ENCODE measurements at regions of chr3 and their contacts with region 1.

Region 1: DNA sequence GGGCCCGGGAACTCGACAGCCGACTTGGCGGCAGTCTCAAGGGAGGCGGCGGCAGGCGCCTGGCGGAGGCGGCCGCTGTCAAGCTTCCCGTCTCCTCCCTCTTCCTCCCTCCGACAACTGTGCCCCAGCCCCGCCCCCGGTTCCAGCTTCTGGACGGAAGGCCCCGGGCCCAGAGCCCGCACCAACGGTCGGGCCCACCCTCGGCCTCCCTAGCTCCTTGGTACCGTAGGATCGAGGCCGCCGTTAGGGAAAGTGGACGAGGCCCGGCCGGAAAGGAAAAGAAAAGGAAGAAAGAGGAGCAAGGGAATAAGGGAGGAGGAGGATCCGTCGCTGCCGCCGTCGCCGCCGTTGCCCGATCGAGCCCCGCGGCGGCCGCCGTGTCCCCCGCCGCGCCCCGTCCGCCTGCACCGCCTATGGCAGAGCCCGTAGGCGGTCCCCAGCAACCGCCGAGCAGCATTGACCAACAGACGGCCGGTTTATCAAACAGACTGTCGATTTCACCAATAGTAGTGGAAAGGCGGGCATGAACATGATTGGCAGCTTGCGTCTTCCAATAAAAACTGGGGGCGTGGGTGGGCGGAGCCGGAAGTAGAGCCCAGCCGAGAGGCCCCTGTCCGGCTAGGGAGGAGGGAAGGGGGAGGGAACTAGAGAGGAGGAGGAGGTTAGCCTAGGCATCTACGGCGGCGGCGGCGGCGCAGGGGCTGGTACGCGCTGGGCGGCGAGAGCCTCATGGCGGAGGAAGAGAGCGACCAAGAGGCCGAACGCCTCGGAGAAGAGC is at the starts of genes CGGBP1 and ZNF654:
- DNase-seq: peak; percentile 98 to 99
- ATAC-seq: peak; percentile 87 to 96 (median 89)
- H3K4me3 ChIP-seq: peak within 1 kb of the TSS; percentile 98
- H3K4me3 Mint-ChIP-seq: peak within 1 kb of the TSS; percentile 99
- H3K27ac ChIP-seq: peak within 1 kb of the TSS; percentile 98
- H3K27ac Mint-ChIP-seq: peak within 1 kb of the TSS; percentile 90 to 97
- H3K4me1 ChIP-seq: peaks cover 8% of the 10 kb centered on the region
- H3K4me1 Mint-ChIP-seq: peaks cover 54 to 57% of the 10 kb centered on the region in 2 donors
- H3K27me3 ChIP-seq: no peaks in the 10 kb centered on the region
- H3K27me3 Mint-ChIP-seq: no peaks in the 10 kb centered on the region
- CTCF ChIP-seq: no peak
- total RNA-seq, gene CGGBP1: 99.8 to 103 (median 101) TPM
- total RNA-seq, gene ZNF654: 11.9 to 16.7 (median 12.2) TPM

Region 2: DNA sequence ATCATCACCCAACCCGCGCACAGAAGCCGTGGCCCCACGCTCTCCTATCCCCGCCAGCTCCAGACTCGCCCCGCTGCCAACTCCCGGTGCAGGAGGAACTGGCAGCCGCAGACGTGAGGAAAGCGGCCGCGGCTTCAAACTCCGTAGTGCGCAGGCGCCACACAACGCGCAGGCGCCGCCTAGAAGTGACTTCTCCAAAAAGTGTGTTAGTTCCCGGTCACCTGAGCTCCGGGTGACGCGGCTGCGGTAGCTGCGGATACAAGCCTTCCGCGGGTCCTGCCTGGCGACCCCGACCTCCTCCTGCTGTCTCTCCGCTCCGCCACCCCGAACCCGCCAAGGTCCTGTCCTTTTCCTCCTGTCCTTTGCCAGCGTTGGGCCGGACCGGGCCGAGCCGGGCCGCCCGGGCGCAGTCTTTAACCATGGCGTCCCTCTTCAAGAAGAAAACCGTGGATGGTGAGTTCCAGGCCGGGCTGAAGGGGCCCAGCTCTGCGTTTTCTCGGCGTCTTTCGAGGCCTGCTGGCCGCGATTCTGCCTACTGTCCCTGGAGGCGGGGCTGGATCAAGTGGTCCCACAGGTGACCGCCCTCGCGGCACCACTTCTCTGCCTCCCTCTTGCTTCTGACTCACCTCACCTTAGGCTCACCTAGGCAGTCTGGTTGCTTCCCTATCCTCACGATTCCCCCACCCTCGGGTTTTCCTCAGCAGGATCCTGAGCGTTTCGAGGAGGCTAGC is 831.5 kb before region 1 on chr3 and contains the start of gene CHMP2B:
- intact Hi-C with region 1: loop called (anchors 2 kb)
- DNase-seq: peak; percentile 91 to 96
- ATAC-seq: peak; percentile 88 to 93 (median 91)
- H3K4me3 ChIP-seq: peak within 1 kb of the TSS; percentile 94
- H3K4me3 Mint-ChIP-seq: peak within 1 kb of the TSS; percentile 99
- H3K27ac ChIP-seq: peak within 1 kb of the TSS; percentile 87
- H3K27ac Mint-ChIP-seq: peak within 1 kb of the TSS; percentile 94 to 100
- H3K4me1 ChIP-seq: peaks cover 4% of the 10 kb centered on the region
- H3K4me1 Mint-ChIP-seq: peaks cover 33 to 43% of the 10 kb centered on the region in 2 donors
- H3K27me3 ChIP-seq: peaks cover 3% of the 10 kb centered on the region
- H3K27me3 Mint-ChIP-seq: peaks cover 7 to 14% of the 10 kb centered on the region in 2 donors
- CTCF ChIP-seq: no peak
- total RNA-seq, gene CHMP2B: 22.0 to 34.2 (median 29.1) TPM

Region 3: GRCh38 chr3:88019024-88019423 is 39.8 kb before region 1 on chr3:
- intact Hi-C with region 1: loop called (anchors 5 kb)
- DNase-seq: peak in 1 of 2 donors; percentile 63
- ATAC-seq: peak; percentile 89 to 99 (median 89)
- H3K4me3 ChIP-seq: no peak overlapping the region
- H3K4me3 Mint-ChIP-seq: peak overlapping the region; percentile 19
- H3K27ac ChIP-seq: no peak overlapping the region
- H3K27ac Mint-ChIP-seq: no peak overlapping the region
- H3K4me1 ChIP-seq: peaks cover 8% of the 10 kb centered on the region
- H3K4me1 Mint-ChIP-seq: peaks cover 17 to 24% of the 10 kb centered on the region in 2 donors
- H3K27me3 ChIP-seq: no peaks in the 10 kb centered on the region
- H3K27me3 Mint-ChIP-seq: peaks cover 18 to 58% of the 10 kb centered on the region in 2 donors
- CTCF ChIP-seq: no peak

Region 4: DNA sequence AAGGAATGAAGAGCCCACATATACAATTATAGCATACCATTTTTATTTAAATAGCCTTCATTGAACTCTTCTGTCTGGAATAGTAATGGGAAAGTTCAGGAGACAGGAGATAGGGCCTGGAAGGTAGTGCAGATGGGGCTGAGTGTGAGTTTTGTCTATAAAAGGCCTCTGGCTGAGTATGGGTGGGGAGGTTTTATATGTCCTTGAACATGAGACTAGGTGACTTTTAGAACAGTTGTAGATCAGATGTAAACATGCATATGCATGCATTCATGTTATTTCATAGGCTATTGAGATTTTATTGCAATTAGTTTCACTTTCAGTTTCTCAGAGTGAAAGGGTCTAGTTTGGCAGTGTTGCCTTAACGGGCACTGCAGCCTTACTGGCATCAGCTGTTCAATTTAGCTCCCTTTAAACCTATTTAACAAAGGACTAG is 27.1 kb before region 1 on chr3:
- intact Hi-C with region 1: loop called (anchors 2 kb)
- DNase-seq: peak in 1 of 2 donors; percentile 70
- ATAC-seq: peak; percentile 83 to 91 (median 88)
- H3K4me3 ChIP-seq: peak overlapping the region; percentile 23
- H3K4me3 Mint-ChIP-seq: peak overlapping the region; percentile 79
- H3K27ac ChIP-seq: peak overlapping the region; percentile 78
- H3K27ac Mint-ChIP-seq: peak overlapping the region; percentile 81 to 97
- H3K4me1 ChIP-seq: peaks cover 2% of the 10 kb centered on the region
- H3K4me1 Mint-ChIP-seq: peaks cover 24 to 26% of the 10 kb centered on the region in 2 donors
- H3K27me3 ChIP-seq: no peaks in the 10 kb centered on the region
- H3K27me3 Mint-ChIP-seq: no peaks in the 10 kb centered on the region
- CTCF ChIP-seq: no peak

Region 5: DNA sequence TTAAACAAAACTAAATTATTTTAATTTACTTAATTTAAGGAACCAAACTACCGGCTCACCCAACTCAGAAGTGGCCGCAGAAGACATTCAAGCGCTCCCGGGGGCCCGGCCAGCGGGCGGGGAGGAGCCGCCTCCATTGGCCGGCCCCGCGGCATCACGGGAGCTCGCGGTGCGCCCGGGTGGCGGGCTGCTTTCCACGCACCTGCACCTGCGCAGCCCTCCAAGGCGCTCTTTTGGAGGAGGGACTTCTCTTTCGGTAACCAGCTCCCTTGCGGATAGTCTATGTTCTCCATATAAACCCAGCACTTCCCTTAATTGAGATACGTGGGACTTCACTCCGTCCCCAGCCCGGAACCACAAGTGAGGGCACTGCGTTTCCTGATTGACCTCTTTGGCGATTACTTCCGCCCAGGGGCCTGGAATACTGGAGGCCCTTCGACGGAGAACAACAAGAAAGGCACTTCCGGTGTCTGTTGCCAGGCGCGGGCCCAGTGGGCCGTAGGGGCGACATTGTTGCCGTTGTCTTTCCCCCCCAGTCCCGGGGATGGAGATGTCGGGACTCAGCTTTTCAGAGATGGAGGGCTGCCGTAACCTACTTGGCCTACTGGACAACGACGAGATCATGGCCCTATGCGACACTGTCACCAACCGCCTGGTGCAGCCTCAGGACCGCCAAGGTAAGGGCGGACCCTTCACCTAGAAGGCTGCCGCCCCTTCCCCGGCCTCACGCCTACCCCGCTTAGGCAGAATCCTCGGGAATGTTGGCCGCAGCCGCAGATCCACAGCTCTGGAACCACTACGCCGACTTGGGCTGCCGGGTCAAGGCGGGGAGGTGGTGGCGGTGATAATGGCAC is 91.0 kb after region 1 on chr3 and contains the start of gene C3orf38:
- intact Hi-C with region 1: loop called (anchors 1 kb)
- DNase-seq: peak; percentile 79 to 88
- ATAC-seq: peak; percentile 88 to 92 (median 92)
- H3K4me3 ChIP-seq: peak within 1 kb of the TSS; percentile 86
- H3K4me3 Mint-ChIP-seq: peak within 1 kb of the TSS; percentile 95
- H3K27ac ChIP-seq: peak within 1 kb of the TSS; percentile 92
- H3K27ac Mint-ChIP-seq: peak within 1 kb of the TSS; percentile 91 to 93
- H3K4me1 ChIP-seq: peaks cover 15% of the 10 kb centered on the region
- H3K4me1 Mint-ChIP-seq: peaks cover 17 to 28% of the 10 kb centered on the region in 2 donors
- H3K27me3 ChIP-seq: no peaks in the 10 kb centered on the region
- H3K27me3 Mint-ChIP-seq: no peaks in the 10 kb centered on the region
- CTCF ChIP-seq: no peak
- total RNA-seq, gene C3orf38: 52.5 to 60.4 (median 54.7) TPM

Region 6: GRCh38 chr3:88707837-88708236 is 649.1 kb after region 1 on chr3:
- intact Hi-C with region 1: no loop called
- DNase-seq: no peak
- ATAC-seq: no peak
- H3K4me3 ChIP-seq: no peak overlapping the region
- H3K4me3 Mint-ChIP-seq: no peak overlapping the region
- H3K27ac ChIP-seq: no peak overlapping the region
- H3K27ac Mint-ChIP-seq: no peak overlapping the region
- H3K4me1 ChIP-seq: no peaks in the 10 kb centered on the region
- H3K4me1 Mint-ChIP-seq: no peaks in the 10 kb centered on the region
- H3K27me3 ChIP-seq: no peaks in the 10 kb centered on the region
- H3K27me3 Mint-ChIP-seq: no peaks in the 10 kb centered on the region
- CTCF ChIP-seq: no peak

Measured in natural killer cell (primary cell).